RWPE1 (cell line): ENCODE measurements at regions of chr15 and their contacts with region 1.

Region 1: DNA sequence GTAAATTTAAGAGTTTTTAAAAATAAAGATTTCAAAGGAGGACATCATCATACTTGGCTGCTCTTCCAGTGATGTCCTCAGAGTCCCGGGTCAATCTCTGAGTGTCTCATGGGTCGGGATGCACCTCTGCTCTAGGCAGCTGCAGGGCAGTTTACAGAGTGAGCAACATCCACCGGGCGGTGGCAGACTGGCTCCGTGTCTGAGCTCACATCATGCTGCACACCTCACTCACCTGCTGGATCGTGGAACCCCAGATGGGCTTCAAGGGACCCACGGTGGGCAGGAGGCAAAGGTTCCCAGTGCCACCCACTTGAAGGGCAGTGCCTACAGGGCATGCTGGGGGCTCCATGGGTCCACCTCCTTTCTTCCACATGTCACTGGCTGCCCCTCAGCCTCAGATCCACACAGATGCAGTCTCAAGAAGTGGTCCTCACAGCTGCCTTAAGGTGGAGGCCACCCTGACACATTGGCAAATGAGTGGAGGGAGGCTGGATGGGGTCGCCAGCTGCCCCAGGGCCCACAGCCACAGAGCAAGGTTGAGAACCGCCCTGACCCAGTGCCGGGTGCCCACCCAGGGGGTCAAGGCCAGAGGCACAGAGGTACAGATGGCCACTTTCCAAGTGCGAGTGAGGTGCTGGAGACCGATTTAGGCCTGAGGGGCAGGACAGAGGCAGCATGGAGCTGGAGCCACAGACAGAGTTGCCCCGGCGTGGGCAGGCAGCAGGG is 25.2 kb downstream of the CYFIP1 start:
- DNase-seq: peak; percentile 35
- H3K27ac ChIP-seq: peak overlapping the region; percentile 22
- CTCF ChIP-seq: no peak

Region 2: DNA sequence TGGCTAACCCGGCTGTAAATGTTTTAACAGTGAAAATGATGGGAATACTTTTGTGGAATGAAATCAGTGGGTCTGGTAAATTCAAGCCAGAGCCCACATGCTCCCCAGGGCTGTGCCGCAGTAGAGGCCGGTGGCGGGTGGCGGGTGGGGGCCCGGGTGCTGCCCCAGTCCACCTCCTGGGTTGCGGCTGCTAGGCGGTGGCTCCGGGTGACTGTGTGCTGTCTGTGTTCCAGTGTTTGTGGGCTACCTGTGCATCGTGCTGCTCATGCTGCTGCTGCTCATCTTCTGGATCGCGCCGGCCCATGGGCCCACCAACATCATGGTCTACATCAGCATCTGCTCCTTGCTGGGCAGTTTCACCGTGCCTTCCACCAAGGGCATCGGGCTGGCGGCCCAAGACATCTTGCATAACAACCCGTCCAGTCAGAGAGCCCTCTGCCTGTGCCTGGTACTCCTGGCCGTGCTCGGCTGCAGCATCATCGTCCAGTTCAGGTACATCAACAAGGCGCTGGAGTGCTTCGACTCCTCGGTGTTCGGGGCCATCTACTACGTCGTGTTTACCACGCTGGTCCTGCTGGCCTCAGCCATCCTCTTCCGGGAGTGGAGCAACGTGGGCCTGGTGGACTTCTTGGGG is 131.3 kb before region 1 on chr15:
- CTCF ChIA-PET with region 1: no interaction called
- POLR2A ChIA-PET with region 1: no interaction called
- DNase-seq: no peak
- H3K27ac ChIP-seq: no peak overlapping the region
- CTCF ChIP-seq: no peak

Region 3: GRCh38 chr15:22980189-22981050 is 25.5 kb after region 1 on chr15 and contains the start of gene CYFIP1:
- CTCF ChIA-PET with region 1: interaction called, 10 read pairs
- POLR2A ChIA-PET with region 1: interaction called, 3 read pairs
- DNase-seq: peak; percentile 98
- H3K27ac ChIP-seq: peak within 1 kb of the TSS; percentile 88
- CTCF ChIP-seq: no peak